ENCODE measurements at regions of chr17 and their contacts with region 1.

Region 1: DNA sequence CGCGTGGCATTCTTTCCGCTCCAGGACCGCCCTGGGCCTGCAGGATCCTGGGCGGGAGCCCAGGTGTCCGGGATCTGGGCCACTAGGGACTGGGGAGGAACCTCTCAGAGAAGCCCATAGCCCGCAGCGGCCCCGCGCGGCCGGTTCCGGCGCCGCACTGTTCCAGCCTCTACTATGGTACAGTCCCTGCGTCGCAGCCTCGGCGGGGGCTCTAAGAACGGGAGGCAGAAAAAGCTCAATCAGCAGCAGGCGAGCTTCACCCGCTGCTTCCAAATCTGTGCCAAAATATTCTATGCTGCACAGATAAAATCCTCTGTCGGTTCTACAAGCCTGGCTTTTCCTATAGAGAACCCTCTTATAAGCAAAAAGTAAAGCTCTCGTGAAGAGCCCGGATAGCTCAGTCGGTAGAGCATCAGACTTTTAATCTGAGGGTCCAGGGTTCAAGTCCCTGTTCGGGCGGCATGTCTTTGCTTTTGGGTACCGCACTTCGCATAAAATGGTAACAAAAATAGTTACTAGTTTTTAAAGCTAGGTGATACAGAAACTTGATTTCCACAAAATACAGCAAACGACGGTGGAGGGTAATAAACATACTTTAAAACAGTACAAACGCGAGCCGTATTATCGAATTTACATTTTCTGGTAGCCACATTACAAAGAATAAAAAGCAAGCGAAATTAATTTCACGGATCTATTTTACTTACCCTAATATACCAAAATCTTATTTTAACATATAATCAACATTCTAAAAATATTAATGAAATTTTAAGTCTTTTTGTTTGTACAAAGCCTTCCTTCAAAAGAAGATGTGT is 661 bp upstream of the ALOXE3 start:
- DNase-seq: peak; percentile 59
- H3K4me3 ChIP-seq: peak overlapping the region; percentile 76
- H3K27ac ChIP-seq: peak overlapping the region; percentile 31
- H3K27me3 ChIP-seq: peaks cover 32% of the 10 kb centered on the region
- CTCF ChIP-seq: peak; percentile 90

Region 2: DNA sequence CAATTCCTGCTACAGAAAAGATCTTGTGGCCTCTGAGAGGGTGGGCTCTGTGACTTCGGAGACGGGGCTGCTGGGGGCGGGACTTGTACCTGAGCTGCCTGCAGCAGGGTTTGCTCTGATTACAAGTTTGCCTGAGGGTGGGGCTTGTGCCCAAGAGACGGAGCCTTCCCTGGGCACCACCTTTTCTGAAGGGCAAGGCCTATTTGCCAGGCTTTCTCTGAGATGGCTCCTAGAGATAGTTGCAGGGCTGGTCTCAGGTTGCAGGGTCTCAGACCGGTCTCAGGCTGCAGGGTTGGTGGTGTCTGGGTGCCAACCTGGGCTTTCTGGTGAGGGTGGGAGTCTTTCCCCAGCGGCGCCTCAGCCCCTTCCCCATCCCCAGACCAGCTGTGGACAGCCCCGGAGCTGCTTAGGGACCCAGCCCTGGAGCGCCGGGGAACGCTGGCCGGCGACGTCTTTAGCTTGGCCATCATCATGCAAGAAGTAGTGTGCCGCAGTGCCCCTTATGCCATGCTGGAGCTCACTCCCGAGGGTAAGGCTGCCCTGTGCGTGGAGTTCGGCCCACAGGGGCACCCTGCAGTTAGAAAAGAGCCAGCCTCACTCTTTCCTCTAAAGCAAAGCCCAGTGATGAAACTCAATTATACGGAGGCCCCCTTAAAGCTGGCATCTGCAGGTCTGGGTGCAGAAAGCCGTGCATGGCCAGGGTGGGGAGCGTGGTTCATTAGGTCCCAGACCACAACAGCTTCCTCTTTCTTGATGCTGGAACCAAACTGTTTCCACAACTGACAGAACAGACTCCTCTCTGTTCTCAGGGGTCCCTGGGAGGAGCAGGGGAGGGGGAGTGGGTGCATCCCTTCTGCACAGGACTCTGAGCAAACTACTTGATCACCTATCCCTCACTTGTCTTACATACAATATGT is 106.0 kb before region 1 on chr17:
- CTCF ChIA-PET with region 1: no interaction called
- POLR2A ChIA-PET with region 1: no interaction called
- DNase-seq: no peak
- H3K4me3 ChIP-seq: no peak overlapping the region
- H3K27ac ChIP-seq: no peak overlapping the region
- H3K27me3 ChIP-seq: peaks cover 45% of the 10 kb centered on the region
- CTCF ChIP-seq: no peak

Region 3: GRCh38 chr17:8073627-8074484 is 45.1 kb before region 1 on chr17:
- CTCF ChIA-PET with region 1: interaction called, 30 read pairs
- POLR2A ChIA-PET with region 1: no interaction called
- DNase-seq: no peak
- H3K4me3 ChIP-seq: no peak overlapping the region
- H3K27ac ChIP-seq: peak overlapping the region; percentile 11
- H3K27me3 ChIP-seq: peaks cover 72% of the 10 kb centered on the region
- CTCF ChIP-seq: peak; percentile 83

Region 4: DNA sequence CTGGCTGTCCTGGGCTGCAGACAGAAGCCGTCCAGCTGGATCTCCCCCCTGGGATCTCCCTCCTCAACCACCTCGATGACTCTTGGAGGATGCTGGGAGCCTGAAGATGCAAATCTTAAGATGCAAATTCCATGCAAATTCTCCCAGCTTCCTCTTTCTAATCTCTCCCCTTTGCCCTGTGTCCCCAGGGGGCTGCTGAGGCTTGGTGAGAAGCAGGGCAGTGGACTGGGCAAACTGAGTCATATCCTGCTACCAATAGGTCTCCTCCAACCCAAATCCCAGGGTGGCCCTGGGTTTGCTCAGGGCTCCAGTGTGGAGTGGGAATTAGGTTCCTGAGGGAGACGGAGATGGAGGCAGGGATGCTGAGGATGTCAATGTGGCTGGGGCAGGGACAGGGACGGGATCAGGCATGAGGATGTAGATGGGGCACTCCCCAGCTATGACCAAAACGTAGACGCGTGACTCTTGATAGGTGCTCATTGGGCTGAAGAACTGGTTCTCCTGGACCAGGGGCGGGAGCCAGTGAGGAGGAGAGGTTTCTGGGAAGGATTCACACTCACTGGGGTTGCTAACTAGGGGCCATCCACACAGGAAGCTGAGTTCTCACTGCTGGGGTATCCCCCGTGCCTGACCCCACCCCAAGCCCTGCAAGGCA is 27.8 kb before region 1 on chr17:
- CTCF ChIA-PET with region 1: interaction called, 42 read pairs
- POLR2A ChIA-PET with region 1: no interaction called
- DNase-seq: no peak
- H3K4me3 ChIP-seq: no peak overlapping the region
- H3K27ac ChIP-seq: no peak overlapping the region
- H3K27me3 ChIP-seq: peaks cover 31% of the 10 kb centered on the region
- CTCF ChIP-seq: no peak

Region 5: GRCh38 chr17:8138672-8139371 is 19.8 kb after region 1 on chr17:
- CTCF ChIA-PET with region 1: interaction called, 38 read pairs
- POLR2A ChIA-PET with region 1: no interaction called
- DNase-seq: peak; percentile 95
- H3K4me3 ChIP-seq: peak overlapping the region; percentile 56
- H3K27ac ChIP-seq: peak overlapping the region; percentile 59
- H3K27me3 ChIP-seq: no peaks in the 10 kb centered on the region
- CTCF ChIP-seq: peak; percentile 89

Region 6: DNA sequence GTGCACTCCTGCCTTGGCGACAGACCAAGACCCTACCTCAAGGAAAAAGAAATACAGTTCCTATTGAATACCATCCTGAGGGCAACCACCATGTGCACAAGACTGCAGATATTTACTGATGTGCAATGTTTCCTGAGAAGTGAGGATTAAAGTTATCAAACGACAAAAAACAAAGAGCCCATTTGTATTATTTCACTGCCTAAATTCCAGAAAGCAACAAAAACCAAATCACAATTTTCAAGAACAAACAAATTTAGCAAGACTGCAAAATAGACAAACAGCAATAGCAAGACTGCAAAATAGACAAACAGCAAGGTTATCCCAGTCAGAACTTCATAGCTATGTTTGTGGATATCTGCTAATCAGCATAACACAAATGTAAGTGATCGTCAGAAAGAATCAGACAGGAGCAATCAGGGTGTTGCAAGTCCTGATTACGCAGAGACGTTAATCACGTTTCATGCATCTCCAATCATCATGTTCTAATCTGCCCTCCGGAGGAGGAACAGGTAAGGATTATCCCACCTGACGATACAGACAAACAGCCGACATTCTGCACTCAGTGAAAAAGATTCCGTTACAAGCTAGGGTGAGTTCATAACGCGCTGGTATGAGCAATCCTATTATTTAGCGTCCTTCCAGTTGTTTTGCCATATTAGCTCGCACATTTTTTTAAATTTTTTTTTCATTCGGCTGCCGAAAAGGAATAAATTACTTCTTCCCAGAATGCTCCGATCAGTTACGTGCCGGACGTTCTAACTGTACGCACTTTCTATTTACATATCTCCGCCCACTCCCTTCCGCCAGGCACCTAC is 54.3 kb after region 1 on chr17:
- CTCF ChIA-PET with region 1: interaction called, 6 read pairs
- POLR2A ChIA-PET with region 1: interaction called, 18 read pairs
- DNase-seq: peak; percentile 96
- H3K4me3 ChIP-seq: peak overlapping the region; percentile 60
- H3K27ac ChIP-seq: peak overlapping the region; percentile 98
- H3K27me3 ChIP-seq: no peaks in the 10 kb centered on the region
- CTCF ChIP-seq: no peak

Region 7: DNA sequence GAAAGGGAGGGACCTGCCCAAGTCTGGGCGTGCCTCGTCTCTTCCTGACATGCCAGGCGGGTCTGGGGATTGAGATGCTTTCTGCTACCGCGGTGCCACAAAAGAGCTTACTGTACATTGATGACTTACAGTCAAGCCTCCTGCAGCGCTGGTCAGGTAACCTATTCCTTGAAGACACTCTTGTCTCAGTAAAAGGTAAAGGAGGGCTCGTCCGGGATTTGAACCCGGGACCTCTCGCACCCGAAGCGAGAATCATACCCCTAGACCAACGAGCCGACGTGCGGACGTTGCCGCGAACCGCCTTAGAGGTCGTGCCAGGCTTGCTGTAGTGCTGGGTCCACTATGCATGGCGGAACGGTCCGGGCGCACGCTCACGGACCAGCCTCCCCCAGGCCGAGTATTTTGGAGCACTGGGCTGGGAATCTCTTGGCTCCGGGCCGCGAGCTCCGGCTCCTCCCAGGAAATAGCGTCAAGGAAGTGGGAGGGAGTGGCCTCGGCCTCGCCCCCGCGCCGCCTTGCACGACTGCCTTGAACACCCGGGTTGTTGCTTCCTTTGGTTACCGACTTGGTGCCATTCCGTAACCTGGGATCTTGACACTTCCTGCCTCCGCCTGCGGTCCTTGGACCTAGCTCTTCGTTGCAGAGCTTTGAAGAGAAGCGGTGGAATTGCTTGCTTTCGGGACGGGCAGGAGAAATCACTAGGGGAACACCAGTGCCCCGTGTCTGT is 103.8 kb after region 1 on chr17:
- CTCF ChIA-PET with region 1: interaction called, 11 read pairs
- POLR2A ChIA-PET with region 1: interaction called, 4 read pairs
- DNase-seq: peak; percentile 93
- H3K4me3 ChIP-seq: peak overlapping the region; percentile 87
- H3K27ac ChIP-seq: peak overlapping the region; percentile 92
- H3K27me3 ChIP-seq: no peaks in the 10 kb centered on the region
- CTCF ChIP-seq: no peak

Region 8: DNA sequence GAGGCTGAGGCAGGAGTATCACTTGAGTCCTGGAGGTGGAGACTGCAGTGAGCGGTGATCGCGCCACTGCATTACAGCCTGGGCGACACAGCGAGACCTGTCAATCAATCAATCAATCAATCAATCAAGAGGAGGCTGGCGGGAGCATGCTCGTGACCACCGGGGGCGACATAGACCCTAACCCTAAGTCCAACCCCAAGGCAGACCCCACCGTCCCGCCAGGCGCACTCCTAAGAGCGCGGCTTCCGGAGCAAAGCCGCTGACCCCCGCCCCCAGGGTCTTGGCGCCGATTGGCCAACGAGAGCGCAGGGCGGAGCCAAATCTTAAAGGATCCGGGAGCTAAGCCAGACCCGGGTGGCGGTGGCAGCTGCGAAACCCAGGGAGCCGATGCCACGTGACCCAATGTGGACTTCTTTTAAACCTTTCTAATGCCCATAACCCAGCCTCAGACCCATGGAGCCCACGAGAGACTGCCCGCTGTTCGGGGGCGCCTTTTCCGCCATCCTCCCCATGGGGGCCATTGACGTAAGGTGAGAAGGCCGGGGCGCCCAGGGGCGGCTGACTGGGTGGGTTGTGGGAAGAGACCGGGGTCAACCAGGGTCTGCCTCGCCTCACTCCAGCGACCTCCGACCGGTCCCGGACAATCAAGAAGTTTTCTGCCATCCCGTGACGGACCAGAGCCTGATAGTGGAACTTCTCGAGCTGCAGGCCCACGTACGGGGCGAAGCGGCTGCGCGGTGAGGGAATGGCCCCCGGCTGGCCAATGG is 169.5 kb after region 1 on chr17 and contains the start of gene RANGRF:
- CTCF ChIA-PET with region 1: interaction called, 10 read pairs
- POLR2A ChIA-PET with region 1: no interaction called
- DNase-seq: no peak
- H3K4me3 ChIP-seq: peak within 1 kb of the TSS; percentile 84
- H3K27ac ChIP-seq: peak within 1 kb of the TSS; percentile 87
- H3K27me3 ChIP-seq: no peaks in the 10 kb centered on the region
- CTCF ChIP-seq: no peak
- polyA plus RNA-seq, gene RANGRF: 26.4 and 30.8 TPM in 2 replicates